ENCODE measurements at regions of chr22 and their contacts with region 1.

Region 1: GRCh38 chr22:37218771-37219411 is 6.6 kb upstream of the SSTR3 start:
- DNase-seq: no peak
- H3K4me3 ChIP-seq: no peak overlapping the region
- H3K27ac ChIP-seq: no peak overlapping the region
- H3K4me1 ChIP-seq: no peaks in the 10 kb centered on the region
- H3K27me3 ChIP-seq: no peaks in the 10 kb centered on the region
- CTCF ChIP-seq: no peak

Region 2: DNA sequence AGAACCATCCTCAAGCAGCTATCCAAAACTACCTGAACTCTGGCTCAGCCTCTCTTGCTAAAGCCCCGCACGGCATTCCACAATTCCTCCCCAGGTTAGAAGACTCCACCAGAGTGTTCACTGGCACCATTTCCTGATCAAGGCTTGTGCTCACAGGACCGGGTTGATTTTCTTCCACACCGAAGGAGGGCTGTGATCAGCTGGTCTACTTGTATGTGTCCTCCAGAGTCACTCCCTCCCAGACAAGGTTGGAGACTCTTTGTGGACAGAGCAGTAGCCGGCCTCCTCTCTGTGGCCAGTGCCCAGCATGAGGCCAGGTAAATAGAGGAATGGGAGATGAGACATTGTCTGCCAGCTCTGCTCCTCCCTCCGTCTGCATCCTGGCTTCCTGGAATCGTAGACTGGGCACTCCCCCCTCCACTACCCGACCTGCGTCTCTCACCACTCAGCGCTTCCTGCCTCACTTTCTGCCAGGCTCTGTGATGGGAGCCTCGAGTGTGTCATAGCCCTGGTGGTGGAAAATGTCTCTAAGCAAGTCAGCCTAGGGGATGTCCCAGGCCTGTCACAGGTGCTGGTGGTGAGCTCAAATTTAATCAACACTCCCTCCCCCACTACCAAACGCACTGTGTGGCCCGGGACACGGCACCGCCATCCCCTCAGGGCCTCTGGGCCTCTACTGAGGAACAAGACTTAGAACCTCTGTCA is 96.9 kb before region 1 on chr22:
- CTCF ChIA-PET with region 1: no interaction called
- dilution Hi-C with region 1: loop called (anchors 5 kb)
- in situ Hi-C with region 1: no loop called
- intact Hi-C with region 1: no loop called
- DNase-seq: peak; percentile 84
- H3K4me3 ChIP-seq: no peak overlapping the region
- H3K27ac ChIP-seq: peak overlapping the region; percentile 48
- H3K4me1 ChIP-seq: peaks cover 13% of the 10 kb centered on the region
- H3K27me3 ChIP-seq: no peaks in the 10 kb centered on the region
- CTCF ChIP-seq: peak in 1 of 2 donors; percentile 37

Region 3: GRCh38 chr22:37186228-37186996 is 32.5 kb before region 1 on chr22:
- CTCF ChIA-PET with region 1: no interaction called
- dilution Hi-C with region 1: no loop called
- in situ Hi-C with region 1: no loop called
- intact Hi-C with region 1: no loop called
- DNase-seq: peak; percentile 68
- H3K4me3 ChIP-seq: no peak overlapping the region
- H3K27ac ChIP-seq: no peak overlapping the region
- H3K4me1 ChIP-seq: peaks cover 33% of the 10 kb centered on the region
- H3K27me3 ChIP-seq: no peaks in the 10 kb centered on the region
- CTCF ChIP-seq: no peak

Region 4: DNA sequence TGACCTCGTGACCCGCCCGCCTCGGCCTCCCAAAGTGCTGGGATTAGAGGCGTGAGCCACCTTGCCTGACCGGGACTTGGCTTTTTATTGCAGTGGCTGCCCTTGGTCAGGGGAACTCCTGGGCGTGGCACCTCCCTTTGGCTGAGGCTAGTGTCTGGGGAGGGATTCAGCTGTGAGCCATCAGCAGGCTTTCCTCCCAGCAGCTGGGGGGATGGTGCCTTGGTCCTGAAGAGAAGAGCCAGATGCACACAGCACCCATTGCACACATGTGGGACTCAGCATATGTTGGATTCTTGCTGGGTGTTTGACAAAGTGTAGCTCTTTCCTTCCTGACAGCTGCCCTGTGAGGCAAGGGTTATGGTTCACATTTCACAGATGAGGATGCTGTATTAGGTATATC is 71.8 kb after region 1 on chr22:
- CTCF ChIA-PET with region 1: no interaction called
- dilution Hi-C with region 1: loop called (anchors 5 kb)
- in situ Hi-C with region 1: no loop called
- intact Hi-C with region 1: no loop called
- DNase-seq: peak; percentile 48
- H3K4me3 ChIP-seq: no peak overlapping the region
- H3K27ac ChIP-seq: no peak overlapping the region
- H3K4me1 ChIP-seq: peaks cover 3% of the 10 kb centered on the region
- H3K27me3 ChIP-seq: no peaks in the 10 kb centered on the region
- CTCF ChIP-seq: no peak

Region 5: DNA sequence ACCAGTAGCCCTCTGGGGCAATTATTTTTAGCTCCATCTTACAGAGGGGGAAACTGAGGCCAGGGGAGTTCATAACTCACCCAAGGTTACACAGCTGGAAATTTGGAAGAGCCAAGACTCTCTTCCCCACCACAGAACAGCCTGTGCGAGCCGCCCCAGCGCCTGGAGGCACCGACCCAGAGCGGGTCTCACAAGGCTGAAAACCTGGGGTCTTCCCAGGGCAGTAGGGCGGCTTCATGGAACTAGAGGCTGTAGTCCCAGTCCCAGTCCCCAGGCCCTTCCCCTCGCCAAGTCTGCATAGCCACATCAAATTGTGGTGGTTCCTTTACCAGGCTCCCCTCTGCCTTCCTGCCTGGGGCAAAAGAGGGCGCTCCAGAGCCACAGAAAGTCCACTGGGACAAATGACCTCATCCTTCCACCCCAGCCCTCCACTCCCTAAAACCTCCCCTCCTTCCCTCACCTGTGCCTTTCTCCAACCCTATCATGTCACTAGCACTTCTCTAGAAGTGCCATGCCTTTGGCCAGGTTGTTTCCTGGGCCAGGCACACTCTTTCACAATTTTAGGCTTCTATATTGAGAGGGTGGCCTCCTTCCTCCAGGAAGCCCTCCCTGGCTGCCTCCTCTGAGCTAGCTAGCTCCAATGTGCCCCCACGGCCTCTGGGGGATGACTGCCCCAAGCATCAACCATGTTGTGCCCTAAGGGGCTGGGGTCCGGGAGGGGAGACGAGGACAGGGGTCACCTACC is 326.2 kb after region 1 on chr22:
- CTCF ChIA-PET with region 1: no interaction called
- dilution Hi-C with region 1: no loop called
- in situ Hi-C with region 1: no loop called
- intact Hi-C with region 1: no loop called
- DNase-seq: peak; percentile 80
- H3K4me3 ChIP-seq: no peak overlapping the region
- H3K27ac ChIP-seq: peak overlapping the region; percentile 66
- H3K4me1 ChIP-seq: peaks cover 51% of the 10 kb centered on the region
- H3K27me3 ChIP-seq: no peaks in the 10 kb centered on the region
- CTCF ChIP-seq: peak; percentile 79 to 83

Measured in mammary epithelial cell (primary cell).